ENCODE measurements at regions of chr7 and their contacts with region 1.

Region 1: DNA sequence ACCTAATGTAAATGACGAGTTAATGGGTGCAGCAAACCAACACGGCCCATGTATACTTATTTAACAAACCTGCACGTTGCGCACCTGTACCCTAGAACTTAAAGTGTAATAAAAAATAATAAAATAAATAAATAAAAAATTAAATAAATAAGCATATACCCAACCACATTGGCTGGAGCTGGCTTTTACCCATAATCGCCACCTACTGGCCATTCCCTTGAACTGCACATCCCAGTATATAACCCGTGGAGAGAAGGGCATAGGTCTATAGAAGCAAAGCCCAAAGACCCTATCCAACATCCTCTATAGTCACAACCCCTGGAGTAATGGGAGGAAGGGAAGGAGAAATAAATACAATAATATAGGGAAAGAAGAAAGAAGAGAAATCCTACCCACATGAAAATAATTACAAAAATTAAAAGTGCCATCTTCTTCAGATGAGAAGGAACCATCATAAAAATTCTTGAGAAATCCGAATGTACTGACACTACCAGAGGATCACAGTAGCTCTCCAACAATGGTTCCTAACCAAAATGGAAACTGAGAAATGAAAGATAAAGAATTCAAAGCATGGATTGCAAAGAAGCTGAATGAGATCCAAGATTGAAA is 65.6 kb downstream of the TWIST1 start:
- H3K4me3 ChIP-seq: no peak overlapping the region
- H3K27ac ChIP-seq: no peak overlapping the region
- H3K4me1 ChIP-seq: no peaks in the 10 kb centered on the region
- CTCF ChIP-seq: no peak

Region 2: DNA sequence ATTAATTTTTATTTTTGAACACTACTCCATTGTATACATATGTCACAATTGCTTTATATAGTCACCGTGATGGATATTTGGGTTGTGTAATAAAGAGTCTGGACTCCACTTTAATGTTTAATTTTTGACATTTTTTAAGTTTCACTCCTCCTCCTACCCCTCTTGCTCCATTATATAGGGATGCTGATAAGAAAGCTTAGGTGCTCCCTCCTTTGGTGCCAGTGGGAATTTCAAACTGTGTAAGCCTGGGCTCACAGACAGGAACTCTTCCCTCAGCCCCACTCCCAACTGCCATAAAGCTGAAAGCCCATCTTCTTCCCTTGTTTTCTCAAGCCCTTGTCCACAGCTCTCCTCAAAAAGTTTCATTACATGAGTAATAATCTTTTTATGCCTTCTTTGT is 18.0 kb after region 1 on chr7:
- CTCF ChIA-PET with region 1: interaction called, 14 read pairs
- POLR2A ChIA-PET with region 1: no interaction called
- H3K4me3 ChIP-seq: no peak overlapping the region
- H3K27ac ChIP-seq: no peak overlapping the region
- H3K4me1 ChIP-seq: no peaks in the 10 kb centered on the region
- CTCF ChIP-seq: no peak